ENCODE measurements at regions of chr16 and their contacts with region 1.

Region 1: GRCh38 chr16:86563489-86564345 is 2.9 kb upstream of the FOXC2 start:
- H3K4me3 Mint-ChIP-seq: peak overlapping the region; percentile 42
- H3K27ac Mint-ChIP-seq: no peak overlapping the region
- H3K4me1 Mint-ChIP-seq: peaks cover 8% of the 10 kb centered on the region
- H3K27me3 Mint-ChIP-seq: peaks cover 63% of the 10 kb centered on the region

Region 2: GRCh38 chr16:87062569-87063442 is 499.1 kb after region 1 on chr16:
- intact Hi-C with region 1: loop called (anchors 1 kb)
- H3K4me3 Mint-ChIP-seq: peak overlapping the region; percentile 13
- H3K27ac Mint-ChIP-seq: no peak overlapping the region
- H3K4me1 Mint-ChIP-seq: peaks cover 48% of the 10 kb centered on the region
- H3K27me3 Mint-ChIP-seq: peaks cover 4% of the 10 kb centered on the region

Region 3: DNA sequence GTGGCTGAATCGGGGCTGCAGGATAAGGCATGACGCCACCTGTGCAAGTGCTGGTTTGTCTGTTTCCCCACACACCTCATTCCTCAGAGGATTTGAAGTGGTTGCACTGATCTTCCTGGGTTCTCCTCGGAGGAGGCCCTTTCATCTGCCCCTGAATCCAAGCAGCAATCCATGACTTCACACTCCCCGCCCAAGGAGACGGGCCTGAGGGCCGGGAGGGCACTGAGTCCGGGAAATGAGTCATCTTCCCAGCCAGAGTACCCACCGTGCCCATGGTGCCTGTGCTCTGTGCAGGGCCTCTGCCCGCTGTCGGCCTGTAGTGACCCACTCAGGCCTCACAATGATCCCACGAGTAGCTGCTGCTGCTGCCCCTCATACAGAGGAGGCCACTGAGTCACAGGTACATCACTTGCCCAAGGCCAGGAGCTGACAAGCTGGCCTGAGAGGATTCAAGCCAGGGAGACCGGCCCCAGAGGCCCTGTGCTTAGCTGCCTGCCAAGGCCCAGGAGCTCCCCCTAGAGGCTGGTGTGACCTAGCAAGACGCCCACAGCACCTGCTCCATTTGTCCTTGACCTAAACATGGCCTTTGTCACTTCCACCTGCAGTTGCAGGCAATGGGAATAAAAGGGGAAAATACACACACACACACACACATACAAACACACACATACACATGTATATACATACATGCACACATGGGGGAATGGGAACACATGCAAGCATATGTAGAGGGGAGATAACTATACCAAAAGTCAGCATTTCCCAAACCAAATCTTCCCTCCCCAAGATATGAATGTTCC is 513.4 kb after region 1 on chr16:
- intact Hi-C with region 1: loop called (anchors 1 kb)
- H3K4me3 Mint-ChIP-seq: no peak overlapping the region
- H3K27ac Mint-ChIP-seq: no peak overlapping the region
- H3K4me1 Mint-ChIP-seq: no peaks in the 10 kb centered on the region
- H3K27me3 Mint-ChIP-seq: peaks cover 19% of the 10 kb centered on the region

Region 4: GRCh38 chr16:87278191-87279095 is 714.7 kb after region 1 on chr16:
- intact Hi-C with region 1: loop called (anchors 5 kb)
- H3K4me3 Mint-ChIP-seq: no peak overlapping the region
- H3K27ac Mint-ChIP-seq: no peak overlapping the region
- H3K4me1 Mint-ChIP-seq: peaks cover 10% of the 10 kb centered on the region
- H3K27me3 Mint-ChIP-seq: peaks cover 27% of the 10 kb centered on the region

Measured in dendritic cell treated with granulocyte-macrophage colony-stimulating factor and Interleukin-4, amounts not matched to agents 40 ng/mL and 50 ng/mL, for 4 days (primary cell).